CD8-positive, alpha-beta T cell (primary cell): ENCODE measurements at regions of chr19 and their contacts with region 1.

Region 1: GRCh38 chr19:49468746-49469447 is 5.1 kb upstream of the FLT3LG start:
- DNase-seq: peak; percentile 73 to 98 (median 91)
- ATAC-seq: peak; percentile 70
- H3K4me3 ChIP-seq: peak overlapping the region in 1 of 2 experiments; percentile 9
- H3K4me3 Mint-ChIP-seq: peak overlapping the region; percentile 69
- H3K27ac ChIP-seq: peak overlapping the region; percentile 88 to 90
- H3K27ac Mint-ChIP-seq: peak overlapping the region; percentile 99
- H3K4me1 ChIP-seq: peaks cover 55% of the 10 kb centered on the region
- H3K4me1 Mint-ChIP-seq: peaks cover 44% of the 10 kb centered on the region
- H3K27me3 ChIP-seq: no peaks in the 10 kb centered on the region
- H3K27me3 Mint-ChIP-seq: no peaks in the 10 kb centered on the region
- CTCF ChIP-seq: no peak

Region 2: GRCh38 chr19:49264258-49264657 is 204.6 kb before region 1 on chr19:
- CTCF ChIA-PET with region 1: interaction called, 4 read pairs
- POLR2A ChIA-PET with region 1: no interaction called
- intact Hi-C with region 1: loop called (anchors 2 kb)
- DNase-seq: no peak
- ATAC-seq: no peak
- H3K4me3 ChIP-seq: no peak overlapping the region
- H3K4me3 Mint-ChIP-seq: no peak overlapping the region
- H3K27ac ChIP-seq: no peak overlapping the region
- H3K27ac Mint-ChIP-seq: no peak overlapping the region
- H3K4me1 ChIP-seq: no peaks in the 10 kb centered on the region
- H3K4me1 Mint-ChIP-seq: peaks cover 3% of the 10 kb centered on the region
- H3K27me3 ChIP-seq: no peaks in the 10 kb centered on the region
- H3K27me3 Mint-ChIP-seq: peaks cover 16% of the 10 kb centered on the region
- CTCF ChIP-seq: no peak

Region 3: GRCh38 chr19:49272184-49272583 is 196.7 kb before region 1 on chr19:
- CTCF ChIA-PET with region 1: interaction called, 4 read pairs
- POLR2A ChIA-PET with region 1: no interaction called
- intact Hi-C with region 1: loop called in 1 of 2 experiments (anchors 2 kb)
- DNase-seq: no peak
- ATAC-seq: no peak
- H3K4me3 ChIP-seq: no peak overlapping the region
- H3K4me3 Mint-ChIP-seq: no peak overlapping the region
- H3K27ac ChIP-seq: no peak overlapping the region
- H3K27ac Mint-ChIP-seq: no peak overlapping the region
- H3K4me1 ChIP-seq: no peaks in the 10 kb centered on the region
- H3K4me1 Mint-ChIP-seq: no peaks in the 10 kb centered on the region
- H3K27me3 ChIP-seq: no peaks in the 10 kb centered on the region
- H3K27me3 Mint-ChIP-seq: peaks cover 13% of the 10 kb centered on the region
- CTCF ChIP-seq: no peak

Region 4: DNA sequence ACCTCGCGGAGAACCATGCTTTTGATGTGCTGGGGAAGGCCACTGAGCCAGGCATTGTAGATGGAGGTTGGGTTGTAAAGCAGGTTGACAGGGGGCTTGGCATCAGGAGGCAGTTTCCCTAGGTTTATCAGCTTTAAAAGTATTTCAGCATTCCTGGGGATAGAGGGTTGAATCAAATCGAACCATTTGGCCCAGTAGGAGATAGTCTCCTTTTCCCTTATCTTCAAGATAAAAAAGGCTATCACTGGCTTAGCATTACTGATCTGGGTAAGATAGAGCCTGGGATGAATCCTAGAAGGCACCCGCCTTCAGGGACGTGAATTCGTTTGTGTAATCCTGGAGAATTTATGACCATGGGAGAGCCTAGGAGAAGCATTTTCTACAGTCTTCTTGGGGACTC is 174.5 kb before region 1 on chr19:
- CTCF ChIA-PET with region 1: no interaction called
- POLR2A ChIA-PET with region 1: no interaction called
- intact Hi-C with region 1: no loop called
- DNase-seq: no peak
- ATAC-seq: no peak
- H3K4me3 ChIP-seq: no peak overlapping the region
- H3K4me3 Mint-ChIP-seq: no peak overlapping the region
- H3K27ac ChIP-seq: no peak overlapping the region
- H3K27ac Mint-ChIP-seq: no peak overlapping the region
- H3K4me1 ChIP-seq: no peaks in the 10 kb centered on the region
- H3K4me1 Mint-ChIP-seq: no peaks in the 10 kb centered on the region
- H3K27me3 ChIP-seq: no peaks in the 10 kb centered on the region
- H3K27me3 Mint-ChIP-seq: no peaks in the 10 kb centered on the region
- CTCF ChIP-seq: no peak

Region 5: GRCh38 chr19:49333811-49334288 is 135.0 kb before region 1 on chr19:
- CTCF ChIA-PET with region 1: interaction called, 4 read pairs
- POLR2A ChIA-PET with region 1: interaction called, 3 read pairs
- intact Hi-C with region 1: loop called in 1 of 2 experiments (anchors 1 kb)
- DNase-seq: peak; percentile 33 to 90 (median 73)
- ATAC-seq: peak; percentile 59
- H3K4me3 ChIP-seq: peak overlapping the region; percentile 20 to 50
- H3K4me3 Mint-ChIP-seq: peak overlapping the region; percentile 77
- H3K27ac ChIP-seq: peak overlapping the region; percentile 46 to 89
- H3K27ac Mint-ChIP-seq: peak overlapping the region; percentile 99
- H3K4me1 ChIP-seq: peaks cover 68% of the 10 kb centered on the region
- H3K4me1 Mint-ChIP-seq: peaks cover 76% of the 10 kb centered on the region
- H3K27me3 ChIP-seq: no peaks in the 10 kb centered on the region
- H3K27me3 Mint-ChIP-seq: no peaks in the 10 kb centered on the region
- CTCF ChIP-seq: no peak

Region 6: DNA sequence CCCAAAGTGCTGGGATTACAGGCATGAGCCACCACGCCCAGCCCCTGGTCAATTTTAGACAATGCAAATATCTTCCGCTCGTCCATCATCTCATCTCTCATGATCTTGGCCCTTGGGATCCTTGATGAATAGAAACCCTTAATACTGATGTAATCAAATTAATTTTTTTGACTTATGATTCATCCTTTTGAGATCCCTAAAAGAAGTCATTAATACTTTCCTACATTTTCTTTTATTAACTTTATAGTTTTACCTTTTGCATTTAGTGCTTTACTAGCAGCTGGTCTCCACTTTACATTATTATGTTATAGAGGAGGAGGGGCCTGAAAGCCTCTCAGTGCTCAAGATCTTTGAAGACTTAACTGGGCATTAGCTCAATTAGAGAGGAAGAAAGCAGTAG is 88.5 kb before region 1 on chr19:
- CTCF ChIA-PET with region 1: no interaction called
- POLR2A ChIA-PET with region 1: no interaction called
- intact Hi-C with region 1: no loop called
- DNase-seq: no peak
- ATAC-seq: no peak
- H3K4me3 ChIP-seq: no peak overlapping the region
- H3K4me3 Mint-ChIP-seq: no peak overlapping the region
- H3K27ac ChIP-seq: no peak overlapping the region
- H3K27ac Mint-ChIP-seq: no peak overlapping the region
- H3K4me1 ChIP-seq: no peaks in the 10 kb centered on the region
- H3K4me1 Mint-ChIP-seq: no peaks in the 10 kb centered on the region
- H3K27me3 ChIP-seq: no peaks in the 10 kb centered on the region
- H3K27me3 Mint-ChIP-seq: peaks cover 12% of the 10 kb centered on the region
- CTCF ChIP-seq: no peak